Esophagus muscularis mucosa (tissue), 4 donors: ENCODE measurements at regions of chr20 and their contacts with region 1.

Region 1: DNA sequence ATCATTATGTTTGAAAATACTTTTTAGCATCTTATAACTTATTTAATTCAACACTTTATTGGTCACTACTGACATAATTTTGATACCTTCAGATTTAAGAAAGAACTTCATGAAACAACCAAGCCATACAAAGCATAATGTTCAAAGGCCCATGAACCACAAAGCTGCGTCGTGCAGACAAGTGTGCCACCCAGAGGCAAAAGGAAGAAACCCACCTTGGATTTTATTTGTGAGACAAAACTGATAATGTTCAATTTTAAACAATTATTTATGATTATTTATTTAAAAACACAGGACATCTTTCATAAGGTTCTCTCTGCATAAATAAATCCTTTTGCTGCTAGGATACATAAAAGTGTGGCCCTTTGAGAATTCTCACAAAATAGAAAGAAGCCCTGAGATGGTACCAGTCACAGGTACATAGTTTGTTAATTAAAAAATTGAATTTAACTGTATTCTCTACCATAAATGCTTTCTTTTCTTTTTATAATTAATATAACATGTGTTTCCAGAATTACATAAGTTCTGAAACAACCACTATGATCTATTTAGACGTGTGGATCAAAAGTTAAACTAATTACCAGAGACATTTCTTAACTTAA is 143.7 kb downstream of the RALGAPA2 start:
- DNase-seq: no peak
- H3K4me3 ChIP-seq: no peak overlapping the region
- H3K27ac ChIP-seq: no peak overlapping the region
- H3K4me1 ChIP-seq: no peaks in the 10 kb centered on the region
- H3K27me3 ChIP-seq: no peaks in the 10 kb centered on the region
- CTCF ChIP-seq: peak; percentile 52 to 59 (median 54)
- EP300 ChIP-seq: no peak
- POLR2A ChIP-seq: no peak

Region 2: GRCh38 chr20:20360464-20360863 is 208.2 kb before region 1 on chr20:
- intact Hi-C with region 1: loop called (anchors 5 kb)
- DNase-seq: no peak
- H3K4me3 ChIP-seq: no peak overlapping the region
- H3K27ac ChIP-seq: no peak overlapping the region
- H3K4me1 ChIP-seq: peaks cover 9 to 38% (median 26%) of the 10 kb centered on the region in 4 donors
- H3K27me3 ChIP-seq: peaks cover 0 to 62% (median 25%) of the 10 kb centered on the region in 4 donors
- CTCF ChIP-seq: peak; percentile 59 to 78 (median 59)
- EP300 ChIP-seq: no peak
- POLR2A ChIP-seq: no peak

Region 3: GRCh38 chr20:20520776-20521175 is 47.9 kb before region 1 on chr20:
- intact Hi-C with region 1: loop called (anchors 10 kb)
- DNase-seq: no peak
- H3K4me3 ChIP-seq: no peak overlapping the region
- H3K27ac ChIP-seq: no peak overlapping the region
- H3K4me1 ChIP-seq: peaks cover 0 to 11% (median 2%) of the 10 kb centered on the region in 4 donors
- H3K27me3 ChIP-seq: no peaks in the 10 kb centered on the region
- CTCF ChIP-seq: no peak
- EP300 ChIP-seq: no peak
- POLR2A ChIP-seq: no peak